Motor neuron (in vitro differentiated cells): ENCODE measurements at regions of chr19 and their contacts with region 1.

Region 1: GRCh38 chr19:49085020-49085867 is at the start of gene SNRNP70:
- ATAC-seq: peak; percentile 85 to 97 (median 91)
- H3K4me3 ChIP-seq: peak within 1 kb of the TSS; percentile 71 to 85 (median 81)
- H3K27ac ChIP-seq: peak within 1 kb of the TSS; percentile 89 to 96
- H3K4me1 ChIP-seq: peaks cover 13 to 19% of the 10 kb centered on the region in 2 donors
- total RNA-seq, gene SNRNP70: 101 to 312 (median 157) TPM

Region 2: DNA sequence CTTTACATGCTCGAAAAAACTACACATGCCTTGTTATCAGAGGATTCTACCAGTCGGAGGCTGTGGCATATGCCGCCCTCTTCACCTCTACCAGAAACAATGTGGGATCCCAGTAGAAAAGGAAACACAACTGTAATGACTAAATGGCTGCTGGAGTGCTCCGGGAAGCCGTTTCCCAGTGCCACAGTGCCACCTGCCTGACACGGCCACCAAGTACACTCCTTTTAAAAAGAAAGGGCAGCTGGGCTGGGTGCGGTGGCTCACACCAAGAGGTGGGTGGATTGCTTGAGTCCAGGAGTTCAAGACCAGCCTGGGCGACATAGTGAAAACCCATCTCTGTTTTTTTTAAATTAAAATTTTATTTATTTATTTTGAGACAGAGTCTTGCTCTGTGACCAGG is 139.6 kb after region 1 on chr19:
- in situ Hi-C with region 1: loop called in 5 of 9 experiments (anchors 25 kb)
- ATAC-seq: peak in 6 of 8 experiments; percentile 53 to 77 (median 68)
- H3K4me3 ChIP-seq: no peak overlapping the region
- H3K27ac ChIP-seq: no peak overlapping the region
- H3K4me1 ChIP-seq: no peaks in the 10 kb centered on the region

Region 3: GRCh38 chr19:50628146-50628545 is 1542.9 kb after region 1 on chr19:
- in situ Hi-C with region 1: no loop called
- ATAC-seq: no peak
- H3K4me3 ChIP-seq: no peak overlapping the region
- H3K27ac ChIP-seq: no peak overlapping the region
- H3K4me1 ChIP-seq: no peaks in the 10 kb centered on the region